ENCODE measurements at regions of chr11 and their contacts with region 1.

Region 1: GRCh38 chr11:72642884-72643511 is 31.2 kb downstream of the PDE2A start:
- DNase-seq: peak; percentile 78
- H3K4me3 ChIP-seq: peak overlapping the region in 1 of 3 experiments; percentile 43
- H3K27ac ChIP-seq: no peak overlapping the region
- H3K4me1 ChIP-seq: peaks cover 9% of the 10 kb centered on the region
- H3K27me3 ChIP-seq: peaks cover 0 to 2% of the 10 kb centered on the region in 2 experiments
- CTCF ChIP-seq: peak; percentile 93 to 97
- POLR2A ChIP-seq: no peak

Region 2: DNA sequence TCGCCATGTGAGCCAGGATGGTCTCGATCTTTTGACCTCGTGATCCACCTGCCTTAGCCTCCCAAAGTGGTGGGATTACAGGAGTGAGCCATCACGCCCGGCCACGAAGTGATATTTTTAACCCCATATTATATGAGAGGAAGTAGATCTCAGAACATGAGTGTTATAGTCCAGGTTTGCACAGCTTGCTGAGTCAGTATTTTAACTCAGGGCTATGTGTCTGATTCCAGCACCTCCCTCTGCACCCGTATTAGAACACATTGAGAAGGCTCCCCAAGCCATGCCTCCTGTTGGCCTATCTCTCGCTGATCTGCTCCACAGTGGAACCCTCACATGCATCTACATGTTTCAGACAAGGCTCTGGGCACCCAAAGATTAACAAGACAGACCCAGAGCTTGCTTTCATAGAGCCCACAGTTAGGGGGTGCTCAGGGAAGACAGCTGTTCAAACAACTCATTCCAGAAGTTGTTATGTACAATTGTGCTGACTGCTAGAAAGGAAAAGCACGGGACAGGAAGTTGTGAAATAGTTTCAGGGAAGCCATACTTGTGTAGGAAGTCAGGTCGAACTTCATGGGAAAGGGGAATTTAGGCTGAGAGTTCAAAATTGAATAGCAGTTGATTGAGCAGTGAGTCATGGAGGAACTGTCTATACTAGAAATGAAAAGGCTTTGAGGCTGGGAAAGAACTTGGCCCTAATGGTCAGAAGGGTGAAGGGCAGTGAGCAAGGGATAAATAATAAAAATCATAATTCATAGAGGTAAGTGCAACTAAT is 159.4 kb before region 1 on chr11:
- CTCF ChIA-PET with region 1: no interaction called
- POLR2A ChIA-PET with region 1: no interaction called
- dilution Hi-C with region 1: no loop called
- intact Hi-C with region 1: loop called (anchors 1 kb)
- DNase-seq: peak; percentile 92
- H3K4me3 ChIP-seq: no peak overlapping the region
- H3K27ac ChIP-seq: peak overlapping the region; percentile 55
- H3K4me1 ChIP-seq: peaks cover 10% of the 10 kb centered on the region
- H3K27me3 ChIP-seq: peaks cover 10 to 11% of the 10 kb centered on the region in 2 experiments
- CTCF ChIP-seq: no peak
- POLR2A ChIP-seq: no peak

Region 3: DNA sequence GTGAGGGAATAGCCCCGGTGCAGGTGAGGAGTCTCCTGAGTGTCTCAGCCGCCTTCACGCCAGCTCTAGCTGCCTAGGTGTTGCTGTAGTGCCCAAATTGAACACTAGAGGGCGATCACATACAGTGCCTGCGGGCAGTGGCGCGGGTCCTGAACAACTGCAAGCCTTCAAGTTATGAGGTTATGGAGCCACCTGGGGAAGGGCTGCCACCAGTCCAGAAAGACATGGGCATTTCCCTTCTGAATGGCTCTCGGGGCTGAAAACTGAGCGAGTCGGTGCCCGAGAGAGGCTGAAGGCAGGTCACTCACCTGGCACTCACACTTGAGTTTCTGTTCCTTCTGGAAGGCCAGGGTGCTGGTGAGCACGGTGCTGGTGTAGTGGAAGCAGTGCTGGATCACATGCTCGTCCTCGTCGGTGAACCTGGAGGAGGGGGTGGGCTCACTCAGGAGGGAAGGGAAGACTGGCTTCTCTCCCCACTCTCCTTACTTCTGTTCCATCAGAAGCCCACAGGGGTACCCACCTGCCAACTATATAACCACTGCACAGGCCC is 57.2 kb before region 1 on chr11:
- CTCF ChIA-PET with region 1: interaction called, 106 read pairs
- POLR2A ChIA-PET with region 1: no interaction called
- dilution Hi-C with region 1: no loop called
- intact Hi-C with region 1: loop called (anchors 1 kb)
- DNase-seq: peak; percentile 69
- H3K4me3 ChIP-seq: no peak overlapping the region
- H3K27ac ChIP-seq: no peak overlapping the region
- H3K4me1 ChIP-seq: no peaks in the 10 kb centered on the region
- H3K27me3 ChIP-seq: peaks cover 2 to 6% of the 10 kb centered on the region in 2 experiments
- CTCF ChIP-seq: peak; percentile 83 to 86
- POLR2A ChIP-seq: no peak

Region 4: GRCh38 chr11:72609045-72609444 is 34.0 kb before region 1 on chr11:
- CTCF ChIA-PET with region 1: interaction called, 19 read pairs
- POLR2A ChIA-PET with region 1: no interaction called
- dilution Hi-C with region 1: no loop called
- intact Hi-C with region 1: no loop called
- DNase-seq: peak; percentile 21
- H3K4me3 ChIP-seq: no peak overlapping the region
- H3K27ac ChIP-seq: no peak overlapping the region
- H3K4me1 ChIP-seq: no peaks in the 10 kb centered on the region
- H3K27me3 ChIP-seq: no peaks in the 10 kb centered on the region
- CTCF ChIP-seq: peak; percentile 56 to 58
- POLR2A ChIP-seq: no peak

Region 5: GRCh38 chr11:72625691-72626413 is 17.1 kb before region 1 on chr11:
- CTCF ChIA-PET with region 1: interaction called, 6 read pairs
- POLR2A ChIA-PET with region 1: no interaction called
- dilution Hi-C with region 1: no loop called
- intact Hi-C with region 1: loop called (anchors 1 kb)
- DNase-seq: peak; percentile 85
- H3K4me3 ChIP-seq: no peak overlapping the region
- H3K27ac ChIP-seq: peak overlapping the region; percentile 80
- H3K4me1 ChIP-seq: peaks cover 19% of the 10 kb centered on the region
- H3K27me3 ChIP-seq: no peaks in the 10 kb centered on the region
- CTCF ChIP-seq: no peak
- POLR2A ChIP-seq: no peak

Region 6: DNA sequence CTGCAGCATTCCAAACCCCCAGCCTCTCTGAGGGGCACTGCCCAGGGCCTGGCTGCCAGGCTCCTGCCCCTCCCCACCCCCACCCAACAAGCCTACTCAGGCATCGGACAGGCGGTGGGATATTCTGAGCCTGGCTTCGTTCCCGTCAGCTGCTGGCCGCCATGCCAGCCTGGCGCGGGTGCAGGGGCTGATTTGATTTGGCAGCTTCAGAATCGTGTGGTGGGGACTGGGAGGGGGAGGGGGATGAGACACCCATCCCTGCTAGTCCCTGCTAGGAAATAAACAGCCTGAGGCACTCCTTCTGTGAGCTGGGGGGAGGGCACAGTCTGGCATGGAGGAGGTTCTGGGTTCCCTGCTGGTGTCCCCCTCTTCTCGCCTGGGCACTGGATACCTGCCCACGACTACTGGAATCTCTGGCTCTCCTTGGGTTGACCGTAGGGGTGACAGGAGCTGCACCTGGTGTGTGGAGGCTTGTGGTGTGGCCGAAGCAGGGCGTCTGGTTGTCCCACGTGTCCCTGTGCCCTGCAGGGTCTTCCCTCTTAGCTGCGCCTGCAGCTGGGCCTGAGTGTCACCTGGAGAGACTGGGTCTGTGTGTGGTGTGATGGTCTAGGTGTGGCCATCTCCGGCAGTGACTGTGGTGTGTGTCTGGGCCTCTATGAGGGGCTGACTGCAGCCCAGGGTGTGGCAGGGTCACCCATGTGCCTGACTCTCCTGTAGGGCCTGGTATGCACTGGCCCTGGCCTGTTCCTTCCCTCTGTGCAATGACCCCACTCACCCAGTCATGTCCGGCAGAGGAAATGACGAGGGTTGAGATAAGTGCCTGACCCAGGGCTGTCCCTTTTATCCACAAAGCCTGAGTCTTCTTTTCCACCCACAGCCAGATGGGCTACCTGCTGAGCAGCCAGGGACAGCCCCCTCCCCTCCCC is 10.9 kb before region 1 on chr11:
- CTCF ChIA-PET with region 1: interaction called, 4 read pairs
- POLR2A ChIA-PET with region 1: no interaction called
- dilution Hi-C with region 1: no loop called
- intact Hi-C with region 1: loop called (anchors 1 kb)
- DNase-seq: peak; percentile 86
- H3K4me3 ChIP-seq: no peak overlapping the region
- H3K27ac ChIP-seq: peak overlapping the region; percentile 83
- H3K4me1 ChIP-seq: peaks cover 38% of the 10 kb centered on the region
- H3K27me3 ChIP-seq: no peaks in the 10 kb centered on the region
- CTCF ChIP-seq: no peak
- POLR2A ChIP-seq: peak; percentile 76

Region 7: GRCh38 chr11:72693271-72693968 is 50.4 kb after region 1 on chr11:
- CTCF ChIA-PET with region 1: no interaction called
- POLR2A ChIA-PET with region 1: no interaction called
- dilution Hi-C with region 1: no loop called
- intact Hi-C with region 1: no loop called
- DNase-seq: no peak
- H3K4me3 ChIP-seq: no peak overlapping the region
- H3K27ac ChIP-seq: no peak overlapping the region
- H3K4me1 ChIP-seq: no peaks in the 10 kb centered on the region
- H3K27me3 ChIP-seq: no peaks in the 10 kb centered on the region
- CTCF ChIP-seq: peak in 1 of 2 donors; percentile 2
- POLR2A ChIP-seq: no peak

Region 8: DNA sequence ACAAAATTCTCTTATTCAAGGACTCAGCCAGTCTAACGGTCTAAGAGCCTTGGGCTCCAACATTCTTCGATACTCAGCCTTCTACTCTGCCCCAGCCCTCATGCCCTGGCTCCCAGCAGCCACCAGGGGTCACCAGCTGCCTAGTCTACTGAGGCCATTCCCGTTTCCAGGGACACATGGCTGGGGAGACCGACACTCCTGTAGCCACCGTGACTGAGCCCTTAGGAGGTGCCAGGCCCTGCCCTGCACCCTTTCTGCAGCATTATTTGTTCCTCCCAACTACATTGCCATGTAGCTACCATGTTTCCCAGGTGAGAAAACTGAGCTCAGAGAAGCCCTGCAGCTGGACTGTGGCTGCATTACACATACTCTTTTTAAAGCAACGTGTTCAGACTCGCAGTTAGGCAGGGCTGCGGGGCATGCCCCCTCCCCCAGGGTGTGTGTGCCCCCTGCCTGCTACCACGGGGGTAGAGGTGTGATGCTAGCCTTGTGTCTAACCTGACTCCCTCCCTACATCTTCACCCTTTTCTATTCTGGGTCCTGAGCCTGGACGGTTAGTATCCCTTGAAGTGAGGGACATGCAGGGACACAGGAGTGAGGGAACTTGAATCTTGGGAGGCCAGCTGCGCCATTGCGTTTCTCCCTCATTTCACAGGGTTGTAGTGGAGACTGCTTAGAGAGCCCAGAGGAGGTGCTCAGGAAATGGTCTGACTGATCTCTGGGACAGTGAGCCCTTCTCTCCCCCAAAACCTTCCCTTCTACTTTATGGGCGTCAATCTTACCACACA is 188.7 kb after region 1 on chr11:
- CTCF ChIA-PET with region 1: no interaction called
- POLR2A ChIA-PET with region 1: no interaction called
- dilution Hi-C with region 1: no loop called
- intact Hi-C with region 1: no loop called
- DNase-seq: peak; percentile 80
- H3K4me3 ChIP-seq: no peak overlapping the region
- H3K27ac ChIP-seq: no peak overlapping the region
- H3K4me1 ChIP-seq: peaks cover 9% of the 10 kb centered on the region
- H3K27me3 ChIP-seq: no peaks in the 10 kb centered on the region
- CTCF ChIP-seq: peak; percentile 91 to 97
- POLR2A ChIP-seq: no peak